Kidney (tissue), 22 donors: ENCODE measurements at regions of chr14 and their contacts with region 1.

Region 1: GRCh38 chr14:93132470-93133065 is 16.8 kb upstream of the ITPK1 start:
- DNase-seq: peak in 1 of 5 donors; percentile 42
- H3K4me3 ChIP-seq: no peak overlapping the region
- H3K27ac ChIP-seq: no peak overlapping the region
- H3K4me1 ChIP-seq: peaks cover 0 to 2% (median 0%) of the 10 kb centered on the region in 3 donors
- H3K27me3 ChIP-seq: no peaks in the 10 kb centered on the region
- CTCF ChIP-seq: peak; percentile 50

Region 2: DNA sequence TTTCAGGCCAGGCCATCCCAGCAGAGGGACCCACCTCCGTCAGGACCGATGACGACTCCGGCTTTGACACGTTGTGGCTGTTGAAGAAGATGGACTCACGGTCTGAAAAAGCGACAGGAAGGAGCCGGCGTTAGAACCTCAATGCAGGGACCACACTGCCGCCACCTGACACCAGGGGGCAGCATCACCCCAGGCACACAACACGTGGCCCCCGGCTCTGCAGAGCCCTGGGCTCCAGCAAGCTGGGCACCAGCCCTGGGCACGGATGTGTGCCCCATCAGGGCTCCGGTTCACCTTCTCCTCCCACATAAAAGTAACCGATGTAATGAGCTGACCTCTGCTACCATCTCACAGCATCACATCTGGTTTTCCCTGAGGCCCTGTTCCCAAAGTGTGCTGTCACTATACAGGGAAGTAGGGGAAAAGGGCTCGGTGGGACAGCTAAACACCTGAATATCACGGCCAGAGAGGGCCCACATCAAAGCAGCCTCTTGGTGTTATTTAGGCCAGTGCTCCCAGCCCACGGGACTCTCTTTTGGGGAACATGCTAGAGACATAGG is 180.6 kb before region 1 on chr14:
- intact Hi-C with region 1: loop called (anchors 10 kb)
- DNase-seq: peak; percentile 67 to 87 (median 77)
- H3K4me3 ChIP-seq: no peak overlapping the region
- H3K27ac ChIP-seq: no peak overlapping the region
- H3K4me1 ChIP-seq: peaks cover 0 to 2% (median 0%) of the 10 kb centered on the region in 3 donors
- H3K27me3 ChIP-seq: no peaks in the 10 kb centered on the region
- CTCF ChIP-seq: peak; percentile 92